ENCODE measurements at regions of chr5 and their contacts with region 1.

Region 1: GRCh38 chr5:178204182-178204894 is at the start of gene HNRNPAB:
- DNase-seq: peak; percentile 96
- ATAC-seq: peak; percentile 79
- H3K4me3 Mint-ChIP-seq: peak within 1 kb of the TSS; percentile 96
- H3K27ac Mint-ChIP-seq: peak within 1 kb of the TSS; percentile 99
- H3K4me1 Mint-ChIP-seq: peaks cover 38% of the 10 kb centered on the region
- H3K27me3 Mint-ChIP-seq: peaks cover 2% of the 10 kb centered on the region
- total RNA-seq, gene HNRNPAB: 335 to 336 TPM

Region 2: GRCh38 chr5:178143901-178144300 is 60.4 kb before region 1 on chr5:
- CTCF ChIA-PET with region 1: no interaction called
- POLR2A ChIA-PET with region 1: no interaction called
- DNase-seq: no peak
- ATAC-seq: no peak
- H3K4me3 Mint-ChIP-seq: no peak overlapping the region
- H3K27ac Mint-ChIP-seq: no peak overlapping the region
- H3K4me1 Mint-ChIP-seq: peaks cover 2% of the 10 kb centered on the region
- H3K27me3 Mint-ChIP-seq: no peaks in the 10 kb centered on the region

Region 3: DNA sequence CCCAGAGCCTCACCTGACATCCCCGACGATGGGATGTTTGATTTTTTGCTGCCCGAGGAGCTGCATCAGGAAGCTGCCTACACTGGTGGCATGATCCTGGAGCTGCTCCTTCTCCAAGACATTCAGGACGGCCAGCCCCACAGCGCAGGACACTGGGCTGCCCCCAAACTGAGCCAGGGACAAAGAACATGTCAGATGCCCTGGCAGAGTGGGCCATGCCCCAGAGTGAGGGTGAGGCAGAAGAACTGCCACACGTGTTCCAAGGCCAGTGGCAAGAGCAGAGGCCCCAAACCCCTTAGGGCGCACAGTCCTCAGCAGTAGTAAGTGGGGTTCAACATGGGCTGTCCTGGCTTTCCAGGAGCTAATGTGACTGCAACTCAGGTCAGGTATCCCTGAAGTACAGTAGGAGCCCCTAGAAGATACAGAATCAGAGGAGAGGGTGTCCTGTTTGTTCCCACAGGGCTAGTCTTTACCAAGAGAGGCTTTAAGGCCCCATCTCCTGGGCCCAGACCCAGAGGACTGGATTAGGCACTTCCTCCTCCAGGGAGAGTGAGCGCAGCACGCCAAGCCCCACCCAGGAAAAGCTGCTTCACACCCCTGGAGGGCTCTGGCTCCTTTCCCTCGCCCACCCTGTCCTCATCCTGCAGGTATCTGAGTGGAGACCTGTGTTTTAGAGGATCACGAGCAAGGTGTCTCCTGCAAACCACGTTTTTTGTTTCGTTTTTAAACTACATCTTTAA is 11.1 kb after region 1 on chr5:
- CTCF ChIA-PET with region 1: interaction called, 5 read pairs
- POLR2A ChIA-PET with region 1: interaction called, 21 read pairs
- DNase-seq: no peak
- ATAC-seq: no peak
- H3K4me3 Mint-ChIP-seq: no peak overlapping the region
- H3K27ac Mint-ChIP-seq: no peak overlapping the region
- H3K4me1 Mint-ChIP-seq: peaks cover 20% of the 10 kb centered on the region
- H3K27me3 Mint-ChIP-seq: no peaks in the 10 kb centered on the region

Region 4: DNA sequence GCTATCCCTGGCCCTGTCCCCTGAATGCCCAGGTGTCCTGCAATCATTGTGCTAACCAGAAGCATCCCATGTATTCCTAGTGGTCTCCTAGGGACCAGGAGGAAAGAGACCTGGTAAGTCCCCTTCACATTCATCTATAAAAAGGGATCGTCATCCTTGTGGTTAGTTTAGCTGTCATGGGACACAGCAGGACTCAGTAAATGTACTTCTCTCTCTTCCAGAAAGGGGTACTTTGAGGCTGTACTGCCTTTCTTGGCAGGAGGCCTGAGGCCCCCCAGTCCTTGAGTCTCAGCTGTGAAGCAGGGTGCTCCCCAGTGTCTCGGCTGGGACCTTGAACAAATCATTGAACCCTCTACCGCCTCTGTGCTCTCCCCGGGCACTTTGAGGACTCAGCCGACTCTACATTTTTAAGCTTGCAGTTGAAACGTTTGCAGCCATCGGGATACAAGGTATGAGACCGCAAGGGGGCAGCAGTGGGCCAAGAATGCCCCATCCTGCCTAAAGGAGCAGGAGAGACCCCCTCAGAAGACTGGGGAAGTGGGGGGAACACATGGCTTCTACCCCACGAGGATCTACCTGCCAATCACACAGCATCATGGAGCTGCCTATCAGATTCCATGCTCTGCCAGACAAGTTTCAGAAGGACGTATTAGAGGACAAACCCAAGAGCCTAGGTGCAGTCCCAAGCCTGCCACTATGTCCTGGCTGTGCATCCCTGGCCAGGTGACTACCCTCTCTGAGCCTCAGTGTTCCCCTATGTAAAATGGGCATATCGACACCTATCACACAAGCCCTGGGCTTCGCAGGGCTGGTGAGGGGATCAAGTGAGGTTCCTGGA is 30.6 kb after region 1 on chr5:
- CTCF ChIA-PET with region 1: interaction called, 11 read pairs
- POLR2A ChIA-PET with region 1: interaction called, 10 read pairs
- DNase-seq: peak; percentile 90
- ATAC-seq: peak; percentile 23
- H3K4me3 Mint-ChIP-seq: no peak overlapping the region
- H3K27ac Mint-ChIP-seq: peak overlapping the region; percentile 65
- H3K4me1 Mint-ChIP-seq: peaks cover 84% of the 10 kb centered on the region
- H3K27me3 Mint-ChIP-seq: no peaks in the 10 kb centered on the region

Region 5: GRCh38 chr5:178241231-178241663 is 36.9 kb after region 1 on chr5:
- CTCF ChIA-PET with region 1: interaction called, 4 read pairs
- POLR2A ChIA-PET with region 1: interaction called, 10 read pairs
- DNase-seq: peak; percentile 77
- ATAC-seq: peak; percentile 41
- H3K4me3 Mint-ChIP-seq: peak overlapping the region; percentile 77
- H3K27ac Mint-ChIP-seq: peak overlapping the region; percentile 96
- H3K4me1 Mint-ChIP-seq: peaks cover 75% of the 10 kb centered on the region
- H3K27me3 Mint-ChIP-seq: no peaks in the 10 kb centered on the region

Region 6: GRCh38 chr5:178404987-178405386 is 200.6 kb after region 1 on chr5:
- CTCF ChIA-PET with region 1: no interaction called
- POLR2A ChIA-PET with region 1: no interaction called
- DNase-seq: no peak
- ATAC-seq: no peak
- H3K4me3 Mint-ChIP-seq: no peak overlapping the region
- H3K27ac Mint-ChIP-seq: no peak overlapping the region
- H3K4me1 Mint-ChIP-seq: no peaks in the 10 kb centered on the region
- H3K27me3 Mint-ChIP-seq: peaks cover 3% of the 10 kb centered on the region

Measured in activated CD8-positive, alpha-beta T cell treated with anti-CD3 and anti-CD28 coated beads, Interleukin-2, amount 10 ng/mL, durations not matched to agents 7 days and 5 days (primary cell).